Activated CD8-positive, alpha-beta T cell treated with anti-CD3 and anti-CD28 coated beads for 36 hours (primary cell): ENCODE measurements at regions of chr1 and their contacts with region 1.

Region 1: GRCh38 chr1:25810341-25811299 is 9.1 kb upstream of the MTFR1L start:
- DNase-seq: peak; percentile 89
- ATAC-seq: peak; percentile 95
- H3K4me3 Mint-ChIP-seq: no peak overlapping the region
- H3K27ac Mint-ChIP-seq: no peak overlapping the region
- H3K4me1 Mint-ChIP-seq: no peaks in the 10 kb centered on the region
- H3K27me3 Mint-ChIP-seq: no peaks in the 10 kb centered on the region
- CTCF ChIP-seq: peak; percentile 99

Region 2: DNA sequence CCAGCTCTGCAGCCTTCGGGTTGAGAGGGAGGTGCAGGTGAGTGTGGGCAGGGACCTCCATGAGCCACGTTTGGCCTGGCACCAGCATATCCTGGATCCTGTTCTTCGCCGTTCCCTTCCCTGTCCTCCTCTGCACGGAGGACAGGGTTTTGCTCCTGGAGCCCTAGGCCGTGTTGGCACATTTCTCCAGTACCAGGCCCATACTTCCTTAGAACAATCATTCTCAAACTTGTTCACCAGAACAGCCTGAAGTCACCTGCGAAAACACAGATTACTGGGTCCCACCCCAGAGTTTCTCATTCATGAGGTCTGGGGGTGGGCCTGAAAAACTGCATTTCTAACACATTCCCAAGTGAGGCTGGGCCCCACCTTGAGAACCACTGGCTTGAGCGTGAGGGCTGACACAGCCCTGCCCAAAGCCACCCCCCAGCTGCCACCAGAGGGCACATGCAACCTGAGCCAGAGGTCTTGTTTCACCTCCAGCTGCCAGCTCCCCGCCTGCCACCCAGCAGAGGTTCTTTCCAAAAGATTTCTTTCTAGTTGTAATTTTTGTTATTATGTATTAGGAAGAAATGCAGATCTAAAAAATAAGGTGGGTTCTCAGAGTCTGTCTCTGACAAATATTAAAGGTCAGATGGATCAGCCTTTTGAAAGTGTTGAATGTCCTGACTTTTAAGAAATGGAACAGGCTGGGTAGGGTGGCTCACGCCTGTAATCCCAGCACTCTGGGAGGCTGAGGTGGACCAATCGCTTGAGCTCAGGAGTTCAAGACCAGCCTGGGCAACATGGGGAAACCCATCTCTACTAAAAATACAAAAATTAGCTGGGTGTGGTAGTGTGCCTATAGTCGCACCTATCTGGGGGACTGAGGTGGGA is 306.8 kb before region 1 on chr1:
- CTCF ChIA-PET with region 1: interaction called, 23 read pairs
- POLR2A ChIA-PET with region 1: no interaction called
- intact Hi-C with region 1: loop called (anchors 5 kb)
- DNase-seq: peak; percentile 82
- ATAC-seq: peak; percentile 92
- H3K4me3 Mint-ChIP-seq: no peak overlapping the region
- H3K27ac Mint-ChIP-seq: no peak overlapping the region
- H3K4me1 Mint-ChIP-seq: peaks cover 14% of the 10 kb centered on the region
- H3K27me3 Mint-ChIP-seq: no peaks in the 10 kb centered on the region
- CTCF ChIP-seq: peak; percentile 77

Region 3: DNA sequence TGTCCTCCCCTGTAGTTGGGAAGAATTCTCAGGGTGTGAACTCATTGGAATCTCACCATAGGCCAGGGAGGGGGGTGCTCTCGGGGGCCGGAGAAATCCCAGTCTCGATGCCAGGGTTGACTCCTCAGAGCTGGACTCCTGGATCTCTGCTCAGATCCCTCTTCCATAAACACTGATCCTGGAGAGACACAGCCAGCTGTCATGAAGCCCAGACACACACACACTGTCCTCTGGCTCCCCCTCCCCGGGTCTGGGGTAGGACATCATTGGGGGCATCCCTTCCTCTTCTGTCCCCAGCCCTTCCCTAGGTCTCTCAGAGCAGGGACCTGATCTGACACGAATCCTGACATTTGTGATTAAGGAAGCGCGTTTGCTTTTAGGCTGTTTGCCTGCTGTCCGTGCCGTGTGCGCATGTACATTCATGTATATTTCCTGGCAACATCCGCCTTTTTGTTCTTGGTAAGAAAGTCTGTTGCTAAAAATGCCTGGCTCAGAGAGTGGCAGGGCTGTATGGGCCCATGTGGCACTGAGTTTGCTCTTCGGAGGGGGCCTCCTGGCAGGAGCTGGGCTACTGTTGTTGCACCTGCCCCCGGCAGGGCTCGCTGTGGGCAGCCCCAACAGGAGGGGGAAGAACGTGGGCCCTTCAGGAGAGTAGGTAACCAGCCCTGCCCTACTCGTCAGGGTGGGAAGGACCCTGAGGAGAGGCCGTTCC is 56.0 kb before region 1 on chr1:
- CTCF ChIA-PET with region 1: no interaction called
- POLR2A ChIA-PET with region 1: no interaction called
- intact Hi-C with region 1: no loop called
- DNase-seq: peak; percentile 61
- ATAC-seq: peak; percentile 84
- H3K4me3 Mint-ChIP-seq: no peak overlapping the region
- H3K27ac Mint-ChIP-seq: peak overlapping the region; percentile 54
- H3K4me1 Mint-ChIP-seq: peaks cover 31% of the 10 kb centered on the region
- H3K27me3 Mint-ChIP-seq: no peaks in the 10 kb centered on the region
- CTCF ChIP-seq: peak; percentile 43

Region 4: GRCh38 chr1:25784575-25785051 is 26.0 kb before region 1 on chr1:
- CTCF ChIA-PET with region 1: no interaction called
- POLR2A ChIA-PET with region 1: no interaction called
- intact Hi-C with region 1: no loop called
- DNase-seq: no peak
- ATAC-seq: no peak
- H3K4me3 Mint-ChIP-seq: no peak overlapping the region
- H3K27ac Mint-ChIP-seq: no peak overlapping the region
- H3K4me1 Mint-ChIP-seq: peaks cover 2% of the 10 kb centered on the region
- H3K27me3 Mint-ChIP-seq: no peaks in the 10 kb centered on the region
- CTCF ChIP-seq: no peak

Region 5: GRCh38 chr1:25796811-25797458 is 13.7 kb before region 1 on chr1:
- CTCF ChIA-PET with region 1: interaction called, 37 read pairs
- POLR2A ChIA-PET with region 1: no interaction called
- intact Hi-C with region 1: no loop called
- DNase-seq: peak; percentile 92
- ATAC-seq: peak; percentile 57
- H3K4me3 Mint-ChIP-seq: peak overlapping the region; percentile 45
- H3K27ac Mint-ChIP-seq: peak overlapping the region; percentile 78
- H3K4me1 Mint-ChIP-seq: peaks cover 44% of the 10 kb centered on the region
- H3K27me3 Mint-ChIP-seq: no peaks in the 10 kb centered on the region
- CTCF ChIP-seq: peak; percentile 81

Region 6: GRCh38 chr1:25837262-25837875 is 26.7 kb after region 1 on chr1:
- CTCF ChIA-PET with region 1: no interaction called
- POLR2A ChIA-PET with region 1: no interaction called
- intact Hi-C with region 1: no loop called
- DNase-seq: no peak
- ATAC-seq: no peak
- H3K4me3 Mint-ChIP-seq: no peak overlapping the region
- H3K27ac Mint-ChIP-seq: no peak overlapping the region
- H3K4me1 Mint-ChIP-seq: peaks cover under 1% of the 10 kb centered on the region
- H3K27me3 Mint-ChIP-seq: no peaks in the 10 kb centered on the region
- CTCF ChIP-seq: peak; percentile 46

Region 7: GRCh38 chr1:25848531-25848930 is 37.9 kb after region 1 on chr1:
- CTCF ChIA-PET with region 1: no interaction called
- POLR2A ChIA-PET with region 1: no interaction called
- intact Hi-C with region 1: no loop called
- DNase-seq: no peak
- ATAC-seq: no peak
- H3K4me3 Mint-ChIP-seq: no peak overlapping the region
- H3K27ac Mint-ChIP-seq: no peak overlapping the region
- H3K4me1 Mint-ChIP-seq: no peaks in the 10 kb centered on the region
- H3K27me3 Mint-ChIP-seq: no peaks in the 10 kb centered on the region
- CTCF ChIP-seq: no peak